Right ventricle myocardium superior (tissue), 1 donor: ENCODE measurements at regions of chr10 and their contacts with region 1.

Region 1: DNA sequence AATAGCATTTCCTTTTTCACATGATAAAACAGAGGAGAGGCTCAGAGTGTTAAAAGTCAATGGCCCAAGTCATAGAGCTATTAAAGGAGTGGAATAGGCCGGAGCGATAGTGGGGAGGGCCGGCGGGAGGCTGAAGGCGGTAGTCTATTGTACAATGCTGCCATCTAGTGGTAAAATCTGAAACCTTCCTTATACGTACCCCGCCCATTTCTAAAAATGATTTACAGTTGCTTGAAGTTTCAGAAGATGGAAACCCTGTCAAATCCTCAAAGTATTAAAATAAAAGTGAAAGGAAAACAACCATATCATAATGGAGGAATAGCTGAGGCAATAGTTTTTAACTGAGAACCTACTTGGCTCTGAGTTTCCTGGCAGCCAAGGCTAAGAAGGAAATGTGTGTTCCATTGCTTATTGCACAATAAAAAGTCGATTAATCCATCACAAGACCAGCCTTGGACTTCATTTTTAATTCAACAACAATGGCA is 209.1 kb downstream of the CCSER2 start:
- DNase-seq: peak; percentile 66
- ATAC-seq: peak; percentile 89

Region 2: DNA sequence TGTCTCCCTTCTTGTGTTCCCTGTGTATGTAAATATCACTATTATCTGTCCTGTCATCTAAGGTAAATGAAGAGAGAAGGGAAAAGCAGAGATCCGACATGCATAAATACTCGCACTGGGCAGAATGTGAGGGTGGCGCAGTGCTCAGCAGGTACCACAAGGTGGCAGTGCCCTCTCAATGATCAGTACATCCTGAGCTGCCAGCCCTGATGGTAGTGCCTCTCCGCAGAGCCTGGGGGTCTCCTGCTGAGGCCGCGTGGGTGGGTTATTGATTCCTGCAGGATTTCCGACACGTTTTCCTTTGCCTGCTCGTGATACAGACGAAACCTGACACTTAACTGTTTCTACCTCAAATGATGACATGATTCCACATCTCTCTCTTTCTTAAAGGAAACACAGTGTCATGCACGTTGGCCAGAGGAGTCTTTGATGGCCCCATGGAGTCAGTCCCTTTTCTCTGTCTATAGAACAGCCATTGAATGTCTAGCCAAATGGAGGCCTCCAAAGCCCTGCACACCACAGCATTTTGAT is 272.8 kb before region 1 on chr10:
- intact Hi-C with region 1: loop called (anchors 5 kb)
- DNase-seq: peak; percentile 81
- ATAC-seq: peak; percentile 96

Region 3: DNA sequence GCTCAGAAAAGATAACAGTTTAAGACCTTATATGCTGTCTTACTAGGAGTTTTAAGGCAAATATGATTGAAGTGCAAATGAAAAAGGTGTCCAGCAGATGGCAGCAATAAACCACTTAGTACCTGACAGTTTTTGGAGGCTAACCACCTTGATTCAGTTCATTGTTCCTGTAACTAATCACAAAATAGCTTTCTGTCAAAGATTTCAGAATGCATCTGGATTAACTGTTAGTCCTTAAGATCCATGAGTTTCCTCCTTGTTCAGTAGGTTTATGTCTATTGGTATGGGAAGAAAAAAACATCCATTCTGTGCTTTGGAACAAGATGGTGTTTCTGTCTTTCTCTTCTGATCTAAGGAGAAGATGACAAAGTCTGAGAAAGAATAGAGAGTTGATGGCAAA is 162.5 kb before region 1 on chr10:
- intact Hi-C with region 1: loop called (anchors 2 kb)
- DNase-seq: no peak
- ATAC-seq: peak; percentile 56

Region 4: GRCh38 chr10:84613336-84614021 is 76.0 kb after region 1 on chr10:
- intact Hi-C with region 1: no loop called
- DNase-seq: no peak
- ATAC-seq: peak; percentile 97